ENCODE measurements at regions of chr3 and their contacts with region 1.

Region 1: GRCh38 chr3:128993461-128994173 is at the start of gene CFAP92:
- DNase-seq: peak; percentile 92 to 96
- ATAC-seq: peak; percentile 95
- H3K4me3 ChIP-seq: peak within 1 kb of the TSS in 1 of 2 donors; percentile 44
- H3K27ac ChIP-seq: no peak within 1 kb of the TSS
- H3K4me1 ChIP-seq: no peaks in the 10 kb centered on the region
- H3K27me3 ChIP-seq: no peaks in the 10 kb centered on the region
- total RNA-seq, gene CFAP92: 0.62 to 1.2 TPM

Region 2: GRCh38 chr3:128879125-128879969 is 114.3 kb before region 1 on chr3 and contains the start of gene ACAD9:
- intact Hi-C with region 1: loop called in 1 of 2 experiments (anchors 10 kb)
- DNase-seq: peak; percentile 98
- ATAC-seq: peak; percentile 99
- H3K4me3 ChIP-seq: peak within 1 kb of the TSS; percentile 64 to 76
- H3K27ac ChIP-seq: peak within 1 kb of the TSS; percentile 84 to 92
- H3K4me1 ChIP-seq: peaks cover 0 to 2% of the 10 kb centered on the region in 2 donors
- H3K27me3 ChIP-seq: no peaks in the 10 kb centered on the region
- total RNA-seq, gene ACAD9: 30.7 to 52.8 TPM

Region 3: DNA sequence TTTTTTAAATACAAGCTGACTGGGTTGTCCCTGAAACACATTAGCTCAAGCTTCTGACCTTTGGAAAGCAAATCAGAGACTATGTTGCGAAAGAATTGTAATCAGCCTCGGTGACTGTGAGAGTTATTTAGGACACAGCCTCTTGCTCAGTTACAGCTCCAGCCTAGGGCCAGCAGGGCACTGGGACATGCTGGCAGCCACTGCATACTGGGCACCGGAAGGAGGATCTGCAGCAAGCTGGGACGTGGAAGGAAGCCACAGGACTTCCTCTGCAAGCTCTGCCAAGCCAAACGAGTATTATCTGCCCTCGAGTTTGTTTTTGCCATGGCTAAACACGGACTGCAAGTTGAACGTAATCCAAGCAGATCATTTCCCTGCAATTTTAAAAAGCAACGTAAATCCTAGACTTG is 231.4 kb after region 1 on chr3:
- intact Hi-C with region 1: no loop called
- DNase-seq: peak; percentile 81 to 93
- ATAC-seq: peak; percentile 92
- H3K4me3 ChIP-seq: no peak overlapping the region
- H3K27ac ChIP-seq: no peak overlapping the region
- H3K4me1 ChIP-seq: no peaks in the 10 kb centered on the region
- H3K27me3 ChIP-seq: no peaks in the 10 kb centered on the region

Measured in aorta (tissue), 5 donors.